Caco-2 (cell line): ENCODE measurements at regions of chr6 and their contacts with region 1.

Region 1: GRCh38 chr6:35240840-35241801 is 18.4 kb upstream of the ZNF76 start:
- DNase-seq: peak; percentile 74 to 88
- H3K4me3 ChIP-seq: no peak overlapping the region
- H3K4me3 Mint-ChIP-seq: no peak overlapping the region
- H3K27ac Mint-ChIP-seq: no peak overlapping the region
- H3K4me1 ChIP-seq: no peaks in the 10 kb centered on the region
- H3K4me1 Mint-ChIP-seq: peaks cover 13% of the 10 kb centered on the region
- H3K27me3 ChIP-seq: no peaks in the 10 kb centered on the region
- H3K27me3 Mint-ChIP-seq: no peaks in the 10 kb centered on the region
- CTCF ChIP-seq: peak; percentile 92 to 96

Region 2: DNA sequence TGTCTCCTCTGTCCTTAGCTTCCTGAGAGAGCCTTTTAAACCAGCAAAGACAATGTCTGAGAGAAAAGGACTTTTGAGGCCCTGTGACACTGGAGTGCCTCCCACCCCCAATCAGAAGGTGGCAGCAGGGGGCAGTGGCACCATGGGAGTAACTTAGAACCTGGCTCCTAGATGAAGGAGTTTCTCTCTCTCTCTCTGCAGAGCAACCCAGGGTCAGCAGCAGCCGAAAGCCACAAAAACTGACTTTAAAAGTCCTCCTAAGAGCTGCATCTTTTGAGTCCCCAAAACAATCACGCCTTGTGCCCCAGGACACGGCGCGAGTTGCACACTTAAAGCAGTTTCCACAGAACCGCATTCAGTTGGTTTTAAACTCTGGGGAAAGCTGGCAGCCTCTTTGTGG is 94.7 kb before region 1 on chr6:
- CTCF ChIA-PET with region 1: interaction called, 19 read pairs
- POLR2A ChIA-PET with region 1: no interaction called
- intact Hi-C with region 1: loop called (anchors 1 kb)
- DNase-seq: peak; percentile 60 to 73
- H3K4me3 ChIP-seq: no peak overlapping the region
- H3K4me3 Mint-ChIP-seq: no peak overlapping the region
- H3K27ac Mint-ChIP-seq: no peak overlapping the region
- H3K4me1 ChIP-seq: peaks cover 8% of the 10 kb centered on the region
- H3K4me1 Mint-ChIP-seq: peaks cover 26% of the 10 kb centered on the region
- H3K27me3 ChIP-seq: no peaks in the 10 kb centered on the region
- H3K27me3 Mint-ChIP-seq: no peaks in the 10 kb centered on the region
- CTCF ChIP-seq: peak; percentile 63 to 83

Region 3: DNA sequence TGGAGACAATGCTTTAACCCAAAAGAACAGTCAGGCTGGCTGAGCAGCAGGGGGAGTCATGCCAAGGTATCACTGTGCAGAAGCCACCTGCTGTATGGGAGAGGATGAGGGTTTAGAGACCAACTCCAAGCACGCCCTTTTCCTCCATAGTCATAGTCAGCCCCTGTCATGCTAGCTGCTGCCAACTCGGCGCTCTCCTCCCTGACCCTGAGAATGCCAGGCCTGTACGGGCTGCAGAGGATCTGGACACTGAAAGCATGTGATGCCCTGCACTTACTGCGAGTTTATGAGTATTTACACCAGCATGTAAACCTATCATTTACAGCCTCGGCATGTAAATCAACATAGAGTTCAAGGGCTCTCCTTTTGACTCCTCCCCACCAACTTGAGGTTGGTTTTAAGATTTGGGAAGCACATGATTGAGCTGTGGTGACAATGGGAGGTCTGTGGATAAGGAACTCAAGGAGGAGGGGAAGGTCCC is 39.0 kb before region 1 on chr6:
- CTCF ChIA-PET with region 1: interaction called, 27 read pairs
- POLR2A ChIA-PET with region 1: no interaction called
- intact Hi-C with region 1: loop called (anchors 1 kb)
- DNase-seq: no peak
- H3K4me3 ChIP-seq: no peak overlapping the region
- H3K4me3 Mint-ChIP-seq: no peak overlapping the region
- H3K27ac Mint-ChIP-seq: no peak overlapping the region
- H3K4me1 ChIP-seq: peaks cover 7% of the 10 kb centered on the region; the same call in 1 of the 2 replicates
- H3K4me1 Mint-ChIP-seq: peaks cover 14% of the 10 kb centered on the region
- H3K27me3 ChIP-seq: no peaks in the 10 kb centered on the region
- H3K27me3 Mint-ChIP-seq: no peaks in the 10 kb centered on the region
- CTCF ChIP-seq: no peak

Region 4: DNA sequence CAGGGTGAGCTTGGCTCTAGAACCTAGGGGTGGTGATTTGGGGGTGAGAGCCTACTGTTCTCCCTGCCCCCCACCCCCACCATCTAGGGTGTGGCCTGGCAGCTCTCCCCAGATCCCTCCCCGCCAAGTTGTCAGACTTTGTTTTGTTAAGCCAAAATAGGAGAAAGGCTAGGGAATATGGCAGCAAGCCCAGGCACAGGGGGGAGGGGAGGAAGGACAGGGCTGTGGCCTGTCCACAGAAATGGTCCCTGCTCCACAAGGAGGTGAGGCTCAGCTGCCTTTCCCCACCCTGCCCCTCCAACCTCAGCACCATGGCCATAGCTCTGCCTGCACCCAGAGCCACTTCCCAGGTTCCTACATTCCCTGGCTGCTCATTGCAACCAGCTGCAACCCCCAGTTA is 10.2 kb before region 1 on chr6:
- CTCF ChIA-PET with region 1: interaction called, 23 read pairs
- POLR2A ChIA-PET with region 1: no interaction called
- intact Hi-C with region 1: no loop called
- DNase-seq: no peak
- H3K4me3 ChIP-seq: no peak overlapping the region
- H3K4me3 Mint-ChIP-seq: no peak overlapping the region
- H3K27ac Mint-ChIP-seq: no peak overlapping the region
- H3K4me1 ChIP-seq: peaks cover 13% of the 10 kb centered on the region
- H3K4me1 Mint-ChIP-seq: peaks cover 18% of the 10 kb centered on the region
- H3K27me3 ChIP-seq: no peaks in the 10 kb centered on the region
- H3K27me3 Mint-ChIP-seq: no peaks in the 10 kb centered on the region
- CTCF ChIP-seq: no peak

Region 5: GRCh38 chr6:35259194-35259947 is 18.2 kb after region 1 on chr6 and contains the start of gene ZNF76:
- CTCF ChIA-PET with region 1: interaction called, 12 read pairs
- POLR2A ChIA-PET with region 1: interaction called, 6 read pairs
- intact Hi-C with region 1: no loop called
- DNase-seq: peak; percentile 96 to 99
- H3K4me3 ChIP-seq: peak within 1 kb of the TSS; percentile 75
- H3K4me3 Mint-ChIP-seq: peak within 1 kb of the TSS; percentile 87
- H3K27ac Mint-ChIP-seq: peak within 1 kb of the TSS; percentile 99
- H3K4me1 ChIP-seq: peaks cover 5% of the 10 kb centered on the region; the same call in 1 of the 2 replicates
- H3K4me1 Mint-ChIP-seq: peaks cover 9% of the 10 kb centered on the region
- H3K27me3 ChIP-seq: no peaks in the 10 kb centered on the region
- H3K27me3 Mint-ChIP-seq: no peaks in the 10 kb centered on the region
- CTCF ChIP-seq: no peak
- total RNA-seq, gene ZNF76: 22.7 and 24.6 TPM in 2 replicates

Region 6: DNA sequence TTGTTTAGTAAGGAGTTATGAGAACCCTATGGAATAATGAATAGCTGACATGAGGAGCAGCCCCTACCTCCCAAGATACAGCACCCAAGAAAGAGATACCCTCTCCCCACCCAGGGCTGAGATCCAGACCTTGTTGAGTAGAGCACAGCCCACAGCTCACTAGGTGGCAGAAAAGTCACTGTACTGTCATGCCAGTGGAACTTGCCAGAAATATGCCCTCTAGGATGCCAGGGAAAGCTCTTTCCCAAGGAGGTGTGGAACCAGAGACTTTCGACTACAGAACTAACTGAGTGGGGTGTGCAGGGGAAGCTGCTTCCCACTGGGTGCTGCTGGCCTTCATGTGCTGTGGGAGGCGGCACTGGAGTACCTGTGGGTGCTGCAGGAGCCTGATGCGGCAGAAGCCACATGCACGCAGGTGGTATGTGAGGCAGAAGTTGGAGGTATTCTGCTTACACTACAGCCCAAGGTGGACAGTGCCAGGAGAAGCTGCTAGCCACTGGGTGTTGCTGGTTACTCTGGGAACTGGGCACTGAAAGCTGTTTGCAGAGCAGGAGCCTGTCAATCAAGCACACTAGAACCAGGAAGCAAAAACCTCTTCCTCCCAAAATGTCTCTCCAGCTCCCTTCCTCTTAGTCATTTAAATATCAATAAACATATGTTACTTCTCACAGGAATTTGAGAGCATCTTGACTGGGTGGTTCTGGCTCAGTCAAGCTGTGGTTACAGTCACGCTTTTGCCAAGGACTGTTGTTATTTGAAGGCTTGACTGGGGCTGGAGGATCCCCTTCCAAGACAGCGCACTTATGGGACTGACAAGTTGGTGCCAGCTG is 513.5 kb after region 1 on chr6:
- CTCF ChIA-PET with region 1: no interaction called
- POLR2A ChIA-PET with region 1: no interaction called
- intact Hi-C with region 1: no loop called
- DNase-seq: no peak
- H3K4me3 ChIP-seq: no peak overlapping the region
- H3K4me3 Mint-ChIP-seq: no peak overlapping the region
- H3K27ac Mint-ChIP-seq: no peak overlapping the region
- H3K4me1 ChIP-seq: no peaks in the 10 kb centered on the region
- H3K4me1 Mint-ChIP-seq: no peaks in the 10 kb centered on the region
- H3K27me3 ChIP-seq: no peaks in the 10 kb centered on the region
- H3K27me3 Mint-ChIP-seq: peaks cover 4% of the 10 kb centered on the region
- CTCF ChIP-seq: no peak